HAP-1 (cell line): ENCODE measurements at regions of chr10 and their contacts with region 1.

Region 1: DNA sequence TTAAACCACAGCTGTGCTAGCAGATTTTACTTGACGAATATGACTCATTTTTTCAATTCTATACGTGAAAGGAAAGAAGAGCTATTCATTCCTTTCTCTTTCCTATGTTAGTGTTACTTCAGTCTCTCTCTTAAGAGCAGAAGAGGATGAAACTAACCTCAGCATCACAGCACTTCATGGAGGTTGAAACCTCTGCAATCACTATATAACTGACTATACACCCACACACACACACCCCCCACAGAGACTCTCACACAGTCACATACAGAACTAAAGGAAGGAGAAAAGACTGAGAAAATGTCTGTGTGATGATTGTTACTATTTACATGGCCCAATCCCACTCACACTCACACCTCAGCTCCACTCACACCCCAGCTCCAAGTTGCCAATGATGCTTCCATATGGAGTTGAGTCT is 104.2 kb downstream of the KIF20B start:
- DNase-seq: no peak
- H3K4me3 ChIP-seq: no peak overlapping the region
- H3K4me1 ChIP-seq: no peaks in the 10 kb centered on the region
- H3K27me3 ChIP-seq: peaks cover 9% of the 10 kb centered on the region; the same call in 1 of the 2 replicates

Region 2: GRCh38 chr10:89516149-89516832 is 289.3 kb before region 1 on chr10:
- in situ Hi-C with region 1: no loop called
- DNase-seq: no peak
- H3K4me3 ChIP-seq: no peak overlapping the region
- H3K4me1 ChIP-seq: peaks cover 4% of the 10 kb centered on the region
- H3K27me3 ChIP-seq: no peaks in the 10 kb centered on the region

Region 3: DNA sequence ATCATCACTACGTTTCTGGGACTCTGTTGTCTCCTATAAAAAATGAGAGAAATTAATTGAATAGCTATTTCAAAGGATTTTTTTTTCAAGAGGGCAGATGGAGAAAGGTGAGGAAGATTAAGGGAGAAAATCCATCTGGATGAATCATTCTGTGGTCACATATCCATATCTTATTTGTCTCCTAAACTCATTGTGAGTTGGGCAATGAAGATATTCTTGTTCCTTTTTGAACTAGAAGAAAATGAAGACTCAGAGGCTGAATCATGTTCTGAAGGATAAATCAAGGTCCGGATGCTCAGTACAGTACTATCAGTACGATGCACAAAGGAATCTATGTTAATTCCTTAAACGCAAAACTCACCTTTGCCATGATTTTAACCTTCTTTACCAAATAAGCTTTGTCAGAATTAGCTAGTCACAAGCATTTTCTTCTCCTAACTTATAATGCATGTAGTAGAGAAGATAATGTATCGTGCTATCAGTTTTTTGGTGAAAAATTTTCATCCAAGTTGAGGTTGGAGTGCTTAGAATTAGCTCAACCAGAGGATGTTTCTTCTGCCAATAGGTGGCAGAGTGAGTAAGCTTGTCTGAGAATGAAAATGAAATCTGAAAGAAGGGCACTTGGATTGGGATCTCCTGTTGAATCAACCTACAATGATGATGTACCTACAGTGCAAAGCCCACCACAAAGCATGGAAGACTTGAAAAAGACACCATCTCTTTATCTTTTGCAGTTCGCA is 342.7 kb after region 1 on chr10:
- in situ Hi-C with region 1: loop called (anchors 25 kb)
- DNase-seq: peak; percentile 7 to 25
- H3K4me3 ChIP-seq: no peak overlapping the region
- H3K4me1 ChIP-seq: peaks cover 3% of the 10 kb centered on the region; the same call in 1 of the 2 replicates
- H3K27me3 ChIP-seq: no peaks in the 10 kb centered on the region

Region 4: GRCh38 chr10:90592638-90593302 is 787.2 kb after region 1 on chr10:
- in situ Hi-C with region 1: loop called (anchors 10 kb)
- DNase-seq: peak; percentile 43 to 67
- H3K4me3 ChIP-seq: no peak overlapping the region
- H3K4me1 ChIP-seq: no peaks in the 10 kb centered on the region
- H3K27me3 ChIP-seq: peaks cover 6% of the 10 kb centered on the region; the same call in 1 of the 2 replicates